Heart left ventricle (tissue), 16 donors: ENCODE measurements at regions of chr21 and their contacts with region 1.

Region 1: GRCh38 chr21:34080710-34081109 is 7.3 kb downstream of the MRPS6 start:
- DNase-seq: no peak
- ATAC-seq: no peak
- H3K4me3 ChIP-seq: no peak overlapping the region
- H3K27ac ChIP-seq: no peak overlapping the region
- H3K4me1 ChIP-seq: peaks cover 0 to 69% (median 32%) of the 10 kb centered on the region in 12 donors
- H3K27me3 ChIP-seq: no peaks in the 10 kb centered on the region
- CTCF ChIP-seq: no peak
- POLR2A ChIP-seq: no peak

Region 2: GRCh38 chr21:34122047-34122446 is 41.3 kb after region 1 on chr21:
- intact Hi-C with region 1: loop called in 3 of 10 experiments (anchors 5 kb)
- DNase-seq: no peak
- ATAC-seq: no peak
- H3K4me3 ChIP-seq: no peak overlapping the region
- H3K27ac ChIP-seq: no peak overlapping the region
- H3K4me1 ChIP-seq: peaks cover 0 to 44% (median 11%) of the 10 kb centered on the region in 12 donors
- H3K27me3 ChIP-seq: no peaks in the 10 kb centered on the region
- CTCF ChIP-seq: no peak
- POLR2A ChIP-seq: no peak

Region 3: DNA sequence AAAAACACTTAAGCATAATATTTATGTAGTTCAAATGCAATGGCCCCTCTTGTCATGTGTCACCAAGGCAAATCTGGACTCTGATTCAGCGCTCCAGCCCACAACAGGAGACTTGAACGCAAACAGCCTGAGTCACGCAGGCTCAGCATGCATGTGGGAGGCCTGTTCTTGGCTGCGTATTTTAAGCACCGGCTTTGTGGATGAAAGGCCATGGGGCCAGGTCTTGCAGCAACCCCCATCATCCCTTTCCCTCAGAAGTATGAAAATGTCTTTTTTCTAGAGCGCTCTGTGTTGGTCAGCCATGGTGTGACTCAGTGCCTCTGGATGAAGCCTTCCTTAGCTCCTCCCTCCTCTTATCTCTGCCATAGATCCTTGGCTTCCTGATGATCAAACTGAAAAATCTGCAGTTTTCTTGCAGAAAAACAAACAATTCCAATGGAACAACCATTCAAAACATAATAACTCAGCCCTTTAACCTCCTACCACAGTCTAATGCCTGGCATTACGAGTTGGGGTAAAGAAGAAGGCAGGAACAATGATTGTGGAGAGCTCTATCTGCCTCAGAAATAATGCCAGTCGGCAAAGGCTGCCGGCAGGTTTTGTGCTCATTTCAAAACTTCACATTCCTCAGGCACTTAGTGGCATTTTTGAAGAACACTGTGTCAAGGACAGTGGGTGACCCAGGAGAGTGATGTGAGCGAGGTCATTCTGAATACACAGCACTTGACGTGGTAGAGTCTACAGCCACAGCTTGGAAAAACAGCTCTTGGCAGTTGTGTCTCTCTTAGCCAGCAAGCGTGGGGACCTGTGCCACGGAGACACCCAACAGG is 755.6 kb after region 1 on chr21:
- intact Hi-C with region 1: no loop called
- DNase-seq: peak in 3 of 5 donors; percentile 22 to 50 (median 29)
- ATAC-seq: peak; percentile 11 to 74 (median 42)
- H3K4me3 ChIP-seq: no peak overlapping the region
- H3K27ac ChIP-seq: peak overlapping the region in 1 of 12 donors; percentile 50
- H3K4me1 ChIP-seq: peaks cover 0 to 78% (median 0%) of the 10 kb centered on the region in 12 donors
- H3K27me3 ChIP-seq: no peaks in the 10 kb centered on the region
- CTCF ChIP-seq: no peak
- POLR2A ChIP-seq: no peak